ENCODE measurements at regions of chr19 and their contacts with region 1.

Region 1: GRCh38 chr19:36850559-36851442 is at the start of gene ZNF345:
- DNase-seq: peak; percentile 91
- H3K4me3 Mint-ChIP-seq: no peak within 1 kb of the TSS
- H3K27ac Mint-ChIP-seq: no peak within 1 kb of the TSS
- H3K4me1 Mint-ChIP-seq: peaks cover 2% of the 10 kb centered on the region
- H3K27me3 Mint-ChIP-seq: no peaks in the 10 kb centered on the region
- total RNA-seq, gene ZNF345: 3.0 to 3.6 TPM

Region 2: DNA sequence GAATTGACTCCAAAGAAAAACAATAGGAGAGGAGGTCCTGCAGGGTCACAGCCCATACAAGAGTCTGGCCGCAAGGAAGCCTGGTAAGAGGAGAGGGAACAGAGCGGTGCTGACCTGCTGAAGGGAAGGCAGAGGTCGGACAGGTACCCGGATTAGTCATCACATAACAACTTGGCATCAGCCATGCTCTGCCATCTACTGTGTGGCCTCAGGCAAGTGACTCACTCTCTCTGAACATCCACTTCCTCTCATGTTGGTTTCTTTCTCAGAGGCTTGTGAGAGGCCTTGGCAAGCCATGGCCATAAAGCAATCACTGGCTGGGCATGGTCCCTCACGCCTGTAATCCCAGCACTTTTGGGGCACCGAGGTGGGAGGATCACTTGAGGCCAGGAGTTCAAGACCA is 718.3 kb before region 1 on chr19:
- CTCF ChIA-PET with region 1: no interaction called
- intact Hi-C with region 1: loop called (anchors 10 kb)
- DNase-seq: peak; percentile 61
- H3K4me3 Mint-ChIP-seq: no peak overlapping the region
- H3K27ac Mint-ChIP-seq: peak overlapping the region; percentile 18
- H3K4me1 Mint-ChIP-seq: peaks cover 32% of the 10 kb centered on the region
- H3K27me3 Mint-ChIP-seq: no peaks in the 10 kb centered on the region

Region 3: GRCh38 chr19:36236304-36236945 is 614.4 kb before region 1 on chr19:
- CTCF ChIA-PET with region 1: no interaction called
- intact Hi-C with region 1: no loop called
- DNase-seq: no peak
- H3K4me3 Mint-ChIP-seq: no peak overlapping the region
- H3K27ac Mint-ChIP-seq: no peak overlapping the region
- H3K4me1 Mint-ChIP-seq: no peaks in the 10 kb centered on the region
- H3K27me3 Mint-ChIP-seq: no peaks in the 10 kb centered on the region

Region 4: GRCh38 chr19:36489118-36489919 is 361.5 kb before region 1 on chr19 and contains the start of gene ZNF566:
- CTCF ChIA-PET with region 1: no interaction called
- intact Hi-C with region 1: loop called (anchors 1 kb)
- DNase-seq: peak; percentile 95
- H3K4me3 Mint-ChIP-seq: peak within 1 kb of the TSS; percentile 96
- H3K27ac Mint-ChIP-seq: peak within 1 kb of the TSS; percentile 98
- H3K4me1 Mint-ChIP-seq: peaks cover 19% of the 10 kb centered on the region
- H3K27me3 Mint-ChIP-seq: no peaks in the 10 kb centered on the region
- total RNA-seq, gene ZNF566: 4.4 to 5.3 TPM

Region 5: DNA sequence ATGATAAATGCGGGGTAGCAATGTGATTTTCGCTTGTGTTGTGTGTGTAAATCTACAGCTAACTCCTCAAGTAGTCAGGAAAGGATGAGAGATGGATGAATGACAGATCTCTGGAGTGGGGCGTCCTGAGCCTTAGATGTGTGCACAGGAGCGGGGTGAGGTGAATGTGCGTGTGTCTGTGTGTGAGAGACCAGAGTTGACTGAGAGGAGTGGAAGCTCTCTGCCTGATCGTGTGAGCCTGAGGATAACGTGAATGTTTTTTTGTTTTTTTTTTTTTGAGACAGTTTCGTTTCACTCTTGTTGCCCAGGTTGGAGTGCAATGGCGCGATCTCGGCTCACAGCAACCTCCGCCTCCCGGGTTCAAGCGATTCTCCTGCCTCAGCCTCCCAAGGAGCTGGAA is 185.0 kb before region 1 on chr19:
- CTCF ChIA-PET with region 1: no interaction called
- intact Hi-C with region 1: loop called (anchors 2 kb)
- DNase-seq: no peak
- H3K4me3 Mint-ChIP-seq: peak overlapping the region; percentile 91
- H3K27ac Mint-ChIP-seq: no peak overlapping the region
- H3K4me1 Mint-ChIP-seq: peaks cover 20% of the 10 kb centered on the region
- H3K27me3 Mint-ChIP-seq: no peaks in the 10 kb centered on the region

Region 6: DNA sequence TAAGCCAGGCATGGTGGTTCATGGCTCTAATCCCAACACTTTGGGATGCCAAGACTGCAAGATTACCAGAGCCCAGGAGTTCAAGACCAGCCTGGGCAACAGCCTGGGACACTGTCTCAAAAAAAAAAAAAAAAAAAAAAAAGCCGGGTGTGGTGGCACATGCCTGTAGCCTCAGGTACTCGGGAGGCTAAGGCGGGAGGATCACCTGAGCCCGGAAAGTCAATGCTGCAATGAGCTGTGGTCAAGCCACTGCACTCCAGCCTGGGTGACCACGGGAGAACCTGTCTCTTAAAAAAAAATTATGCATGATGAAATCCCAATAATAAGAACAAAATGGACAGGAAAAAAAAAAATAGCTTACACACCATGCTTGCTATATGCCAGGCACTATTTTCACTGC is 97.5 kb before region 1 on chr19:
- CTCF ChIA-PET with region 1: no interaction called
- intact Hi-C with region 1: no loop called
- DNase-seq: no peak
- H3K4me3 Mint-ChIP-seq: no peak overlapping the region
- H3K27ac Mint-ChIP-seq: no peak overlapping the region
- H3K4me1 Mint-ChIP-seq: no peaks in the 10 kb centered on the region
- H3K27me3 Mint-ChIP-seq: no peaks in the 10 kb centered on the region

Region 7: GRCh38 chr19:36797786-36798108 is 53.1 kb before region 1 on chr19:
- CTCF ChIA-PET with region 1: no interaction called
- intact Hi-C with region 1: loop called (anchors 1 kb)
- DNase-seq: no peak
- H3K4me3 Mint-ChIP-seq: peak overlapping the region; percentile 84
- H3K27ac Mint-ChIP-seq: peak overlapping the region; percentile 89
- H3K4me1 Mint-ChIP-seq: peaks cover 8% of the 10 kb centered on the region
- H3K27me3 Mint-ChIP-seq: no peaks in the 10 kb centered on the region

Region 8: GRCh38 chr19:37077934-37078725 is 227.3 kb after region 1 on chr19 and contains the start of gene ZNF420:
- CTCF ChIA-PET with region 1: no interaction called
- intact Hi-C with region 1: loop called (anchors 1 kb)
- DNase-seq: peak; percentile 92
- H3K4me3 Mint-ChIP-seq: peak within 1 kb of the TSS; percentile 93
- H3K27ac Mint-ChIP-seq: peak within 1 kb of the TSS; percentile 89
- H3K4me1 Mint-ChIP-seq: peaks cover 21% of the 10 kb centered on the region
- H3K27me3 Mint-ChIP-seq: no peaks in the 10 kb centered on the region
- total RNA-seq, gene ZNF420: 6.4 to 7.3 TPM

Region 9: GRCh38 chr19:37466798-37467607 is 616.2 kb after region 1 on chr19 and contains the start of gene ZNF569:
- CTCF ChIA-PET with region 1: no interaction called
- intact Hi-C with region 1: loop called (anchors 5 kb)
- DNase-seq: peak; percentile 93
- H3K4me3 Mint-ChIP-seq: peak within 1 kb of the TSS; percentile 96
- H3K27ac Mint-ChIP-seq: peak within 1 kb of the TSS; percentile 92
- H3K4me1 Mint-ChIP-seq: peaks cover 28% of the 10 kb centered on the region
- H3K27me3 Mint-ChIP-seq: no peaks in the 10 kb centered on the region
- total RNA-seq, gene ZNF569: 8.6 to 10.6 TPM